Activated CD8-positive, alpha-beta memory T cell treated with anti-CD3 and anti-CD28 coated beads, Interleukin-2, amount 10 ng/mL, durations not matched to agents 7 days and 5 days (primary cell): ENCODE measurements at regions of chr10 and their contacts with region 1.

Region 1: GRCh38 chr10:88553116-88553752 is 29.9 kb downstream of the RNLS start:
- DNase-seq: peak; percentile 63
- ATAC-seq: peak; percentile 92
- H3K4me3 Mint-ChIP-seq: no peak overlapping the region
- H3K27ac Mint-ChIP-seq: no peak overlapping the region
- H3K4me1 Mint-ChIP-seq: peaks cover 6% of the 10 kb centered on the region
- H3K27me3 Mint-ChIP-seq: peaks cover 2% of the 10 kb centered on the region

Region 2: GRCh38 chr10:87850742-87851205 is 702.5 kb before region 1 on chr10:
- CTCF ChIA-PET with region 1: interaction called, 11 read pairs
- DNase-seq: peak; percentile 70
- ATAC-seq: peak; percentile 89
- H3K4me3 Mint-ChIP-seq: no peak overlapping the region
- H3K27ac Mint-ChIP-seq: no peak overlapping the region
- H3K4me1 Mint-ChIP-seq: peaks cover 18% of the 10 kb centered on the region
- H3K27me3 Mint-ChIP-seq: no peaks in the 10 kb centered on the region

Region 3: DNA sequence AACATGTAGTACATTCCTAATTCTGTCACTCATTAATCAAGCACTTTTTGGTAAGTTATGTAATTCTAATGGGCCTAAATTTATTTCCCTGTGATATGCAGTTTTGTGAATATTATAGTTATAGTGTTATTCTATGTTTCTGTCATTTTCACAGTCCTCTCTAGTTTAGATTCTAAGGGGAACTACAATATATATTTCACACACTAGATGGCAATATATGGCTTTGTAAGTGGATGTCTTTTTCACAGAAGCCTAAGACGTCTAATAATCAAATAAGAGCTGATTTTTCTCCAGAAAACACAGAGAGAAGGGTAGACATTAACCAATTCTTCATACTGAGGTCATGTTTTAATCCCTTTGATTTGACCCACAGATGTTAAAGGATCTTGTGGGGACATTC is 11.8 kb after region 1 on chr10:
- CTCF ChIA-PET with region 1: interaction called, 11 read pairs
- DNase-seq: no peak
- ATAC-seq: peak; percentile 42
- H3K4me3 Mint-ChIP-seq: no peak overlapping the region
- H3K27ac Mint-ChIP-seq: no peak overlapping the region
- H3K4me1 Mint-ChIP-seq: peaks cover 2% of the 10 kb centered on the region
- H3K27me3 Mint-ChIP-seq: peaks cover 6% of the 10 kb centered on the region

Region 4: GRCh38 chr10:88642978-88643377 is 89.7 kb after region 1 on chr10:
- CTCF ChIA-PET with region 1: no interaction called
- DNase-seq: no peak
- ATAC-seq: no peak
- H3K4me3 Mint-ChIP-seq: no peak overlapping the region
- H3K27ac Mint-ChIP-seq: no peak overlapping the region
- H3K4me1 Mint-ChIP-seq: no peaks in the 10 kb centered on the region
- H3K27me3 Mint-ChIP-seq: peaks cover 19% of the 10 kb centered on the region